ENCODE measurements at regions of chr3 and their contacts with region 1.

Region 1: DNA sequence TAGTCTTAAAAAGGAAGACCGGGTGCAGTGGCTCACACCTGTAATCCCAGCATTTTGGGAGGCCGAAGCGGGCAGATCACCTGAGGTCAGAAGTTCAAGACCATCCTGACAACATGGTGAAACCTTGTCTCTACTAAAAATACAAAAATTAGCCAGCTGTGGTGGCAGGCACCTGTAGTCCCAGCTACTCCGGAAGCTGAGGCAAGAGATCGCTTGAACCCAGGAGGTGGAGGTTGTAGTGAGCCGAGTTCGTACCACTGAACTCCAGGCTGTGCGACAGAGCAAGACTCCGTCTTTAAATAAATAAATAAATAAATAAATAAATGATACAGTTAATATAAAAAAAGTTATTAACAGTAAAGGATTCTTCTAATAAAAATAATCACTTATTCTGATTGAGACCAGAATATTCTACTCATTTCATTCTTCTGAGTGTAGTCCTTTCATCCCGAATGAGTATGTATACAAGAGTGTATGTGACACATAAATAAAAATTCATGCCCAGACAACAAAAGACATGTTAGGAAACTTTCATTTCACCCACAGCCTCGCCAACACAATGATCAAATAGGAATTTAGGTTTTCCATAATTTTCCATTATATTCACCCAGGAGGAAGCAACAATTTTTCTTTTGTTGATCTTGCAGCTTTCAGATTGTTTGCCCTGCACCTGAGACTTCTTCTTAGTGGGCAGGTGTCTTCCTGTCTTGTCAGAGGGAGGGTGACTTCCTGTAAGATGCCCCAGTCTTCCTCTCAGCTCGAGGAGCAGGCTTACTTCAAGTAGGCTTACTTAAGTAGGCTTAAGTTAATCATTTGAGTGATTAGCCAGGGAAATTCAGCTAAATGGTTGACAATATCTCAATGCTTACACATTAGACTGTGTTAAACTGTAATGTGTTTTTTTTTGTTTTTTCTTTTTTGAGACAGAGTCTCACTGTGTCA is 7.8 kb upstream of the NUP210 start:
- DNase-seq: peak; percentile 89
- H3K4me3 ChIP-seq: peak overlapping the region; percentile 53
- H3K27ac ChIP-seq: peak overlapping the region; percentile 92
- H3K4me1 ChIP-seq: peaks cover 57% of the 10 kb centered on the region
- CTCF ChIP-seq: no peak

Region 2: GRCh38 chr3:13332158-13332557 is 95.8 kb before region 1 on chr3:
- CTCF ChIA-PET with region 1: interaction called, 3 read pairs
- POLR2A ChIA-PET with region 1: interaction called, 13 read pairs
- intact Hi-C with region 1: loop called (anchors 1 kb)
- DNase-seq: peak; percentile 98
- H3K4me3 ChIP-seq: peak overlapping the region; percentile 50
- H3K27ac ChIP-seq: peak overlapping the region; percentile 95
- H3K4me1 ChIP-seq: peaks cover 91% of the 10 kb centered on the region
- CTCF ChIP-seq: no peak

Region 3: GRCh38 chr3:13414040-13414729 is 13.7 kb before region 1 on chr3:
- CTCF ChIA-PET with region 1: no interaction called
- POLR2A ChIA-PET with region 1: interaction called, 16 read pairs
- intact Hi-C with region 1: no loop called
- DNase-seq: peak; percentile 90
- H3K4me3 ChIP-seq: peak overlapping the region; percentile 98
- H3K27ac ChIP-seq: peak overlapping the region; percentile 91
- H3K4me1 ChIP-seq: peaks cover 58% of the 10 kb centered on the region
- CTCF ChIP-seq: 0 out of 2 replicates have a peak, but pooled peaks have one; percentile 17

Region 4: GRCh38 chr3:13740795-13741194 is 312.9 kb after region 1 on chr3:
- CTCF ChIA-PET with region 1: no interaction called
- POLR2A ChIA-PET with region 1: no interaction called
- intact Hi-C with region 1: no loop called
- DNase-seq: no peak
- H3K4me3 ChIP-seq: no peak overlapping the region
- H3K27ac ChIP-seq: no peak overlapping the region
- H3K4me1 ChIP-seq: no peaks in the 10 kb centered on the region
- CTCF ChIP-seq: no peak

Measured in OCI-LY7 (cell line).